PC-3 (cell line): ENCODE measurements at regions of chr1 and their contacts with region 1.

Region 1: GRCh38 chr1:216742625-216743024 is 19.4 kb upstream of the ESRRG start:
- DNase-seq: peak; percentile 54
- ATAC-seq: peak; percentile 48
- H3K4me3 ChIP-seq: no peak overlapping the region
- H3K27ac ChIP-seq: no peak overlapping the region
- H3K4me1 ChIP-seq: no peaks in the 10 kb centered on the region
- H3K27me3 ChIP-seq: peaks cover 31% of the 10 kb centered on the region
- CTCF ChIP-seq: peak; percentile 92

Region 2: GRCh38 chr1:215793180-215793579 is 949.4 kb before region 1 on chr1:
- CTCF ChIA-PET with region 1: no interaction called
- POLR2A ChIA-PET with region 1: interaction called, 10 read pairs
- intact Hi-C with region 1: no loop called
- DNase-seq: peak; percentile 81
- ATAC-seq: peak; percentile 77
- H3K4me3 ChIP-seq: no peak overlapping the region
- H3K27ac ChIP-seq: no peak overlapping the region
- H3K4me1 ChIP-seq: peaks cover 20% of the 10 kb centered on the region
- H3K27me3 ChIP-seq: peaks cover 14% of the 10 kb centered on the region
- CTCF ChIP-seq: peak; percentile 90

Region 3: GRCh38 chr1:215992620-215993019 is 750.0 kb before region 1 on chr1:
- CTCF ChIA-PET with region 1: no interaction called
- POLR2A ChIA-PET with region 1: no interaction called
- intact Hi-C with region 1: loop called (anchors 1 kb)
- DNase-seq: peak; percentile 72
- ATAC-seq: peak; percentile 82
- H3K4me3 ChIP-seq: no peak overlapping the region
- H3K27ac ChIP-seq: no peak overlapping the region
- H3K4me1 ChIP-seq: no peaks in the 10 kb centered on the region
- H3K27me3 ChIP-seq: peaks cover 58% of the 10 kb centered on the region
- CTCF ChIP-seq: peak; percentile 83

Region 4: GRCh38 chr1:216111842-216112241 is 630.8 kb before region 1 on chr1:
- CTCF ChIA-PET with region 1: no interaction called
- POLR2A ChIA-PET with region 1: no interaction called
- intact Hi-C with region 1: loop called (anchors 1 kb)
- DNase-seq: peak; percentile 29
- ATAC-seq: peak; percentile 46; the same call in 1 of the 2 replicates
- H3K4me3 ChIP-seq: no peak overlapping the region
- H3K27ac ChIP-seq: no peak overlapping the region
- H3K4me1 ChIP-seq: no peaks in the 10 kb centered on the region
- H3K27me3 ChIP-seq: peaks cover 38% of the 10 kb centered on the region
- CTCF ChIP-seq: peak; percentile 80

Region 5: GRCh38 chr1:216310776-216311175 is 431.8 kb before region 1 on chr1:
- CTCF ChIA-PET with region 1: no interaction called
- POLR2A ChIA-PET with region 1: no interaction called
- intact Hi-C with region 1: loop called (anchors 1 kb)
- DNase-seq: peak; percentile 86
- ATAC-seq: peak; percentile 63
- H3K4me3 ChIP-seq: no peak overlapping the region
- H3K27ac ChIP-seq: no peak overlapping the region
- H3K4me1 ChIP-seq: peaks cover 16% of the 10 kb centered on the region
- H3K27me3 ChIP-seq: no peaks in the 10 kb centered on the region
- CTCF ChIP-seq: peak; percentile 99

Region 6: DNA sequence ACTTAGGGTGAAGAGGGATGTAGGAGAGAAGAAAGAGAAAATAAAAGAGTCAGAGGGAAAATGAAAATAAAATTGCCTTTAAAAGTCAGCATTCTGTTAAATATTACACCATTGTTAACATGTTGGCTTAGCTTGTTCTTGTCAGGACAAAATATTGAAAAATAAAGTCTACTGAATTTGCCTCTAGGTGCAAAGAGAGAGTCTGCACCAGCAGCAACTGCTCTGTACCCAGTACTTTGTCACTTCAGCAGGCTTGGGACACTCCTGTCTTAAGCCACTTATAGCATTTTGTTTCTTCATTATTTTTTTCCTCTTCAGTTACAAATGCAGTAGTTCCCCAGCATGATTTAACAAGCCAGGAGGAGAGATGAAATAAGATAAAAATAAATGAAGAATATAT is 308.4 kb before region 1 on chr1:
- CTCF ChIA-PET with region 1: no interaction called
- POLR2A ChIA-PET with region 1: no interaction called
- intact Hi-C with region 1: no loop called
- DNase-seq: no peak
- ATAC-seq: no peak
- H3K4me3 ChIP-seq: no peak overlapping the region
- H3K27ac ChIP-seq: no peak overlapping the region
- H3K4me1 ChIP-seq: no peaks in the 10 kb centered on the region
- H3K27me3 ChIP-seq: no peaks in the 10 kb centered on the region
- CTCF ChIP-seq: no peak

Region 7: DNA sequence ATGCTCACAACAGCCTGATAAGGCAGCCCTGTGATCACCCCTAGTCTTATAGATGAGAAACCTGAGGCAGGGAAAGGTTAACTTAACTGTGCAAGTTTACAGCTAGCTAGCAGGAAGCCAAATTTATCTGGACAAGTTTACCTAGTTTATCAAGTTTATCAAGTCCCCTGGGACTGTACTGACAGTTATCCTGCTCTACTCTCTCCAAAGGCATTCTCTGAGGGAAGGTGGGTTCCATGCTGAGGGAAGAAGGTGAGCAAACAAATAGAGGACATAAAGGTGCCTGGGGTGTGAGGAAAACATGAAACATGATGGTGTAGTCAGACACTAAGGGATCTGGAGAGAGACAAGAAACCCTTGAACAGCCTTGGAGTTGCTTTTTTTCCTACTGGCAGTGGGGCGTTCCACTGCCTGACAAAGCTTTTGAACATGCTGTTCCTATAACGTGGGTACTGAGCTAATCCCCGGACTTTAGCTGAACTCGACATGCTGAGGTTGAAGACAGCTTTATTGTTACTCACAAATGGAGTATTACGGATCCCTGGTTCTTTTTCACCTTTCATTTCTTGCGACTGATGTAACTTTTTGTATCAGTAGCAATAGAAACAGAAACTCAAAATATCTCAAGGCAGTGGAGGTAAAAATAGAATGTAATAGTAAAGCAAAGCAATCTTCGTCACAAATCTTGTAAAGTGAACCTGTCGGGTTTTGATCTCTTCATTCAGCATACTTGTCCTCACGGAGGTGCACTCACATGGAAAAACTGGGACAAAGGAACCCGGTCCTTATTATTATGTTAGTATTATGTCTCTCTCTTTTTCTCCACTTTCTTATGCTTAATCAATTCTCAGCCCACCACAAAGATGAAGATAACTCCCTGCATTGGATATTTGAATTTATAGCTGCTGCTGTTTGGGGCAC is 23.0 kb after region 1 on chr1:
- CTCF ChIA-PET with region 1: no interaction called
- POLR2A ChIA-PET with region 1: no interaction called
- intact Hi-C with region 1: no loop called
- DNase-seq: peak; percentile 50
- ATAC-seq: peak; percentile 15
- H3K4me3 ChIP-seq: no peak overlapping the region
- H3K27ac ChIP-seq: no peak overlapping the region
- H3K4me1 ChIP-seq: peaks cover 7% of the 10 kb centered on the region; the same call in 1 of the 2 replicates
- H3K27me3 ChIP-seq: no peaks in the 10 kb centered on the region
- CTCF ChIP-seq: no peak